Activated B cell treated with CpG ODN at 0.5 μM for 24 hours (primary cell): ENCODE measurements at regions of chr1 and their contacts with region 1.

Region 1: GRCh38 chr1:245156081-245156735 is 1.4 kb downstream of the KIF26B start:
- DNase-seq: peak; percentile 72
- ATAC-seq: peak; percentile 93
- H3K4me3 Mint-ChIP-seq: peak overlapping the region; percentile 79
- H3K27ac Mint-ChIP-seq: no peak overlapping the region
- H3K4me1 Mint-ChIP-seq: peaks cover 28% of the 10 kb centered on the region
- H3K27me3 Mint-ChIP-seq: peaks cover 36% of the 10 kb centered on the region
- CTCF ChIP-seq: no peak

Region 2: GRCh38 chr1:245142171-245142798 is 13.9 kb before region 1 on chr1:
- CTCF ChIA-PET with region 1: interaction called, 11 read pairs
- POLR2A ChIA-PET with region 1: no interaction called
- intact Hi-C with region 1: no loop called
- DNase-seq: no peak
- ATAC-seq: no peak
- H3K4me3 Mint-ChIP-seq: no peak overlapping the region
- H3K27ac Mint-ChIP-seq: no peak overlapping the region
- H3K4me1 Mint-ChIP-seq: no peaks in the 10 kb centered on the region
- H3K27me3 Mint-ChIP-seq: peaks cover 15% of the 10 kb centered on the region
- CTCF ChIP-seq: no peak

Region 3: DNA sequence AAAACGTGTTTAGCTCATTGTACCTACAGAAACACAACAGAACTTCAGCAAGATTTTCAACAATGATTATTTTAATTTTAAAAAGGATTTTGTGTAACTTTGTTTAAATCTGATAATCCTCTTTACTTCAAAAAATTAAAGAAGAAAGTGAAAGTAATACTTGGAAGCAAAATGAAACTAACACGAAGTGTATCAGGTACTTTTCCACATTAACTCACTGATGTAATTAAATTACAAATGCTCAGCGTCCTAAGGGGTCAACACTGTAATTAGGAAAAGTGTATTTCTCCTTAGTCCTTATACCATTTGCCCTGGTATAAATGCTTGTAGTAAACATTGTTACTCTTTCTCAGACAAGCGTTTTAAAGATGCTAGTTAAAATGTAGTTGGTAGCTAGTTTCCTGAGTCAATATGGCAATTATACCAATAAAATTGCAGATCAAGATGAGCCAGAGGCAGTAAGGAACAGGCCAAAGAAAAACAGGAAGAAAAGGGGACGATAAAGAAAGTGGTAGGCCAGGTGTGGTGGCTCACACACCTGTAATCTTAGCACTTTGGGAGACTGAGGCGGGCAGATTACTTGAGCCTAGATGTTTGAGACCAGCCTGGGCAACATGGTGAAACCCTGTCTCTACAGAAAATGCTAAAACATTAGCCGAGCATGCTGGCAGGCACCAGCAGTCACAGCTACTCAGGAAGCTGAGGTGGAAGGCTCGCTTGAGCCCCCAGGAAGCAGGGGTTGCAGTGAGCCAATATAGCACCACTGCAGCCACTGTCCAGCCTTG is 797.9 kb after region 1 on chr1:
- CTCF ChIA-PET with region 1: no interaction called
- POLR2A ChIA-PET with region 1: no interaction called
- intact Hi-C with region 1: loop called (anchors 1 kb)
- DNase-seq: no peak
- ATAC-seq: peak; percentile 62
- H3K4me3 Mint-ChIP-seq: peak overlapping the region; percentile 72
- H3K27ac Mint-ChIP-seq: peak overlapping the region; percentile 92
- H3K4me1 Mint-ChIP-seq: peaks cover 42% of the 10 kb centered on the region
- H3K27me3 Mint-ChIP-seq: no peaks in the 10 kb centered on the region
- CTCF ChIP-seq: no peak

Region 4: GRCh38 chr1:246117066-246117791 is 961.0 kb after region 1 on chr1:
- CTCF ChIA-PET with region 1: interaction called, 3 read pairs
- POLR2A ChIA-PET with region 1: no interaction called
- intact Hi-C with region 1: loop called (anchors 1 kb)
- DNase-seq: no peak
- ATAC-seq: peak; percentile 89
- H3K4me3 Mint-ChIP-seq: peak overlapping the region; percentile 38
- H3K27ac Mint-ChIP-seq: peak overlapping the region; percentile 35
- H3K4me1 Mint-ChIP-seq: peaks cover 32% of the 10 kb centered on the region
- H3K27me3 Mint-ChIP-seq: no peaks in the 10 kb centered on the region
- CTCF ChIP-seq: no peak

Region 5: GRCh38 chr1:246497331-246497915 is 1341.2 kb after region 1 on chr1:
- CTCF ChIA-PET with region 1: interaction called, 8 read pairs
- POLR2A ChIA-PET with region 1: no interaction called
- intact Hi-C with region 1: loop called (anchors 1 kb)
- DNase-seq: no peak
- ATAC-seq: peak; percentile 86
- H3K4me3 Mint-ChIP-seq: no peak overlapping the region
- H3K27ac Mint-ChIP-seq: no peak overlapping the region
- H3K4me1 Mint-ChIP-seq: peaks cover 4% of the 10 kb centered on the region
- H3K27me3 Mint-ChIP-seq: no peaks in the 10 kb centered on the region
- CTCF ChIP-seq: peak; percentile 55